ENCODE measurements at regions of chr7 and their contacts with region 1.

Region 1: DNA sequence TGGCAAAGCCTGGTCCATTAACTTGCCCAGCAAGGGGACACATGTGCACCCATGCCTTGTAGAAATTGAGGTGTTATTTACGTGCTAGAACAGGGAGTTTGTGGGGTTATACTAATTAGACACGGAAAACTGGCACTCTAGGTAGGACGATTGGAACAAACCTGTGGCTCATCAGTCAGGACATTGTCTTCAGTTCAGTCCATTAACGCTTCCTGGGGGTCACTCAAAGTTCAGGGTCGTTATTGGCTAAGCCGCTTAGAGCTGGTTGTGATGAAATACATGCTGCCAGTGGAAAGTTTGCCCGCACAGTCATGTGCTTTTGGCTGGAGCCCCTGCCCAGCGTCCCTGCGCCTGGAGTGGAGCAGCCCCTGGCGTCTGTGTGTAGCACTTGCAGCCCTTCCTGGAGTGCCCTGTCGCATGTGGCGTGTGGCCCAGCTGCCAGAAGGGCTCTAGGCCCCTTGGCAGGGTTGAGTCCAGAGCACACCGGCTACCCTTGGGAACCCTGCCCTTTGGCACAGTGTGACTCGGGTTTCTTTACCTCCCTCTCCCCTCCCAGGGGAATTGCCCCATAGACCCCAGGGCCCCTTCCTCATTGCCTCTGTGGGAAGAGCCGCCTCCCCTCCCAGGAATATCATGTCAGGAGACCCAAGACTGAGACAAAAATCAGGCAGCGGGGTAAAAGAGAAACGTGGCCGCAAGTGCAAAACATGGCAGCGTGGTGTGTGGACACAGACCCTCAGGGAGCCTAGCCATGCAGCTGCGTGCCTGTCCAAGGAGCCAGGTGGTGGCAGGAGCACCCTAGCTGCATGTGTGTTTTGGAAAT is 9.8 kb downstream of the ZNF775 start:
- DNase-seq: no peak
- H3K4me3 ChIP-seq: no peak overlapping the region
- H3K27me3 ChIP-seq: no peaks in the 10 kb centered on the region
- CTCF ChIP-seq: peak; percentile 75

Region 2: GRCh38 chr7:149562602-149563001 is 826.3 kb before region 1 on chr7:
- CTCF ChIA-PET with region 1: no interaction called
- POLR2A ChIA-PET with region 1: interaction called, 12 read pairs
- DNase-seq: no peak
- H3K4me3 ChIP-seq: no peak overlapping the region
- H3K27me3 ChIP-seq: no peaks in the 10 kb centered on the region
- CTCF ChIP-seq: no peak

Measured in BJ (cell line).